ENCODE measurements at regions of chr14 and their contacts with region 1.

Region 1: GRCh38 chr14:24051789-24052655 is at the start of gene CARMIL3:
- DNase-seq: peak; percentile 27
- H3K4me3 Mint-ChIP-seq: peak within 1 kb of the TSS; percentile 61
- H3K27ac Mint-ChIP-seq: no peak within 1 kb of the TSS
- H3K4me1 Mint-ChIP-seq: peaks cover 12% of the 10 kb centered on the region
- H3K27me3 Mint-ChIP-seq: peaks cover 82% of the 10 kb centered on the region
- CTCF ChIP-seq: no peak
- total RNA-seq, gene CARMIL3: 0.20 TPM in 1 of 2 replicates, not detected in the other

Region 2: GRCh38 chr14:23861666-23862065 is 190.4 kb before region 1 on chr14:
- CTCF ChIA-PET with region 1: no interaction called
- POLR2A ChIA-PET with region 1: no interaction called
- intact Hi-C with region 1: no loop called
- DNase-seq: peak; percentile 23
- H3K4me3 Mint-ChIP-seq: no peak overlapping the region
- H3K27ac Mint-ChIP-seq: no peak overlapping the region
- H3K4me1 Mint-ChIP-seq: no peaks in the 10 kb centered on the region
- H3K27me3 Mint-ChIP-seq: peaks cover 17% of the 10 kb centered on the region
- CTCF ChIP-seq: no peak

Region 3: DNA sequence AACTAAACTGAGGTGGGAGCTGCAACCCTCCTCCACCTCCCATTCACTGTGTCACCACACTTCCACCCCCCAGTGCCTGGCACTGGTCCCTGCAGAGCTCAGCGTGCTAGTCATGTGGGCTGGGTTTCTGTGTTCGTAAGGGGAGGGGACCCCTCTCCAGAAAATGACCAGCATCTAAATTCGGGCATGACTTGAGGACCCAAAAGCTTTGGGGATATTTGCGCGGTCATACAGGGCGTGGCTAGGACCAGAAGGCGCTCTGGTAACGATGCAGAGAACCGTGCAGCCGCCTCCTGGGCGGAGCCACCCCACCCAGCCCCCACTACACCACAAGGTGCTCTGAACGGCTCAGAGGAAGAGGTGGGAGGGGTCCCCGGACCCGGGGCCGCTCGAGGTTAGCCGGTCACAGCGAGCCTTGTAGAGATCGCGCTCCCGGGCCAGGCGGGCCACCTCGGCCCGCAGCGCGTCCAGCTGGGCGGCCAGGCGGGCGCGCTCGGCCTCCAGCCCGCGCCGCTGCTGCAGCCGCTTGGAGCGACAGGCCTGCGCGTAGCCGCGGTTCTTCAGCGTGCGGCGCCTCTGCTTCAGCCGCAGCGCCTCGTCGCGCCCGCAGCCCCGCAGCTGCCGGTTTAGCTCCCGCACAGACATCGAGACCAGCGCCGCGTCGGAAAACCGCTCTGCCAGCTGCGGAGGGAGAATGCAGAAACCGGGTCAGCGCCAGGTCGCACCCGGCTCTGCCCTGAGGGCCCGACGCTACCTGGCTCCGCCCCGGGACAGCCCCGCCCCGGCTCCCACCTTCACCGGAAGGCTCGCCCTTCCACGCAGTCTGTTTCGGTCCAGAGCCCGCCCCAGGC is 29.1 kb after region 1 on chr14:
- CTCF ChIA-PET with region 1: interaction called, 9 read pairs
- POLR2A ChIA-PET with region 1: interaction called, 6 read pairs
- intact Hi-C with region 1: loop called (anchors 2 kb)
- DNase-seq: peak; percentile 29
- H3K4me3 Mint-ChIP-seq: peak overlapping the region; percentile 74
- H3K27ac Mint-ChIP-seq: no peak overlapping the region
- H3K4me1 Mint-ChIP-seq: no peaks in the 10 kb centered on the region
- H3K27me3 Mint-ChIP-seq: peaks cover 25% of the 10 kb centered on the region
- CTCF ChIP-seq: no peak